Activated CD4-positive, alpha-beta memory T cell treated with anti-CD3 and anti-CD28 coated beads for 36 hours (primary cell): ENCODE measurements at regions of chr6 and their contacts with region 1.

Region 1: GRCh38 chr6:138765896-138766655 is 7.5 kb upstream of the CCDC28A start:
- DNase-seq: no peak
- H3K4me3 Mint-ChIP-seq: no peak overlapping the region
- H3K27ac Mint-ChIP-seq: no peak overlapping the region
- H3K4me1 Mint-ChIP-seq: peaks cover 9% of the 10 kb centered on the region
- H3K27me3 Mint-ChIP-seq: no peaks in the 10 kb centered on the region

Region 2: DNA sequence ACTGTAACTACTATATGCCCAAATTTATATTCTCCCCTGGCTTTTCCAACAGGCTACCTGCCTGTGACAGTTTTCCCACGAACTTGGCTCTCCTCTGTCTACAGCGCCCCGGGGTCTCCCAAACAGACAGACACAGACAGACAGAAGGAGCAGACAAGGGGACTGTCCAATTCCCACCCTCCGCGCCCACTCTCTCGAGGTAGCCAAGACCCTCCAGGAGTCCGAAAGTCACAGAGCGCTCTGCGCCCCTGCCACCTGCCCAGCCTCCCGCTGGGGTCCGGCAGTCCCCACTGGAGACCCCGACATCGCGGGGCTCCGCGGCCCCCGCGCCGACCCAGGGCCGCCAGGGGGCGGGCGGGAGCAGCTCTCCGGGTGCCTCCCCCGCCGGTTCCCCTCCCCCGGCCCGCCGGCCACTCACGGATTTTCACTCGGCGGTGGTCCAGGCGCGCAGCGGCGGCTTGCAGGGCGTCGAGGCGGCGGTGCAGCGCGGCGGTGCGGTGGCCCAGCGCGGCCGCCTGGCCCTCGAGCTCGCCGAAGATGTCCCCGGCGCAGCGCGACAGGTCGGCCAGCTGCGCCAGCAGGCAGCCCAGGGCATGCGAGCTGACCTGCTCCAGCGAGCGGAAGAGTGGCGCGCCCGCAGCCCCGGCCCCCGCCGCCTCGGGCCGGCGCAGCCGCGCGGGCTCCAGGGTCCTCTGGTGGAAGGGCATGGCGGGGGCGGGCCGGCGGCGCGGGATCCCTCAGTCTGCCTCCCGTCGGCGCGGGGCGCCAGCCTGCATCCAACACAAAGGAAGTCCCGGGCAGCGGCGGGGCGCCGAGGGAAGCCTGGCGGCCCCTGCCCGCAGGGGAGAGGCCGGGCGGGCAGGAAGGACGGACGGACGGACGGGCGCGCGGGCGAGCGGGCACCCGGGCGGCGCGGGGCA is 73.8 kb before region 1 on chr6:
- CTCF ChIA-PET with region 1: interaction called, 23 read pairs
- POLR2A ChIA-PET with region 1: no interaction called
- intact Hi-C with region 1: loop called (anchors 1 kb)
- DNase-seq: peak; percentile 64
- H3K4me3 Mint-ChIP-seq: peak overlapping the region; percentile 73
- H3K27ac Mint-ChIP-seq: no peak overlapping the region
- H3K4me1 Mint-ChIP-seq: peaks cover 9% of the 10 kb centered on the region
- H3K27me3 Mint-ChIP-seq: peaks cover 27% of the 10 kb centered on the region

Region 3: GRCh38 chr6:138752017-138752416 is 14.1 kb before region 1 on chr6:
- CTCF ChIA-PET with region 1: interaction called, 11 read pairs
- POLR2A ChIA-PET with region 1: no interaction called
- intact Hi-C with region 1: no loop called
- DNase-seq: no peak
- H3K4me3 Mint-ChIP-seq: no peak overlapping the region
- H3K27ac Mint-ChIP-seq: no peak overlapping the region
- H3K4me1 Mint-ChIP-seq: no peaks in the 10 kb centered on the region
- H3K27me3 Mint-ChIP-seq: no peaks in the 10 kb centered on the region